ENCODE measurements at regions of chr18 and their contacts with region 1.

Region 1: DNA sequence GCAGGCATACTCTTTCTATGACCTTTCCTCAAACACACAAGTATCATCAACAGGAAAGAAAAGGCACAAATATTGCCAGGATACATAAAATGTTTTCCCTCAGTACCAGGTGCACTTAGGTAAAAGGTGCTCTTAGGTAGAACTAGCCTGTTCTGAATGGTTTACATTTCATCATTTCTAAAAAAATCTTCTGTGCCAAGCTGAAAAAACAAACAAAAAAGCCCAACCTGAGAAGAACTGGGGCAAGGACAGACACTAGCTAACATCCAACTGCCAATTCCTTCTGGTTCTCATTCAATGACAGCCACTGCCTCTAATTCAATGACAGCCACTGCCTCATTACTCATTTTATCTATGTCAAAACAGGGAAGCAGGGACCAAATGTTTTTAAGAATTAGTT is 68.5 kb downstream of the SPIRE1 start:
- DNase-seq: no peak
- H3K4me3 ChIP-seq: no peak overlapping the region
- H3K27ac ChIP-seq: no peak overlapping the region
- H3K4me1 ChIP-seq: peaks cover 2% of the 10 kb centered on the region
- H3K27me3 ChIP-seq: no peaks in the 10 kb centered on the region
- CTCF ChIP-seq: no peak
- POLR2A ChIP-seq: no peak

Region 2: DNA sequence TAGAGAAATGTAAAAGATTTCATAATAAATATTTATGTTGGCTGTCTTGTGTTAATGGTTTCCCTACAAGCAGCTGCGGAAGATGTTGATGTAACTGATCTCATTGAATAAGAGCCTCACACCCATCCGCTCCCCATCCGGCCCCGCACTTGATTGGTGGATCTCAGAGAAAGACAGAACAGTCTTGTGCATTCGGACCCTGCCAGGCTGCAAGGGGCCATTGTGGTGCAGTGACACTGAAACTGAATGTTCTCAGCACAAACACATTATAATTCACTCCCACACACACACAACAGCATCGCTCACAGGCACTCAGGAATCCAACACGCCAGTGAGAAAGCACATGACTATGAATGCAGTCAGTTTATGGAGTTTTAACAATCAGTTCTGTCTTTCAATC is 134.0 kb before region 1 on chr18:
- CTCF ChIA-PET with region 1: no interaction called
- POLR2A ChIA-PET with region 1: no interaction called
- dilution Hi-C with region 1: no loop called
- intact Hi-C with region 1: no loop called
- DNase-seq: no peak
- H3K4me3 ChIP-seq: no peak overlapping the region
- H3K27ac ChIP-seq: no peak overlapping the region
- H3K4me1 ChIP-seq: peaks cover 20% of the 10 kb centered on the region
- H3K27me3 ChIP-seq: no peaks in the 10 kb centered on the region
- CTCF ChIP-seq: no peak
- POLR2A ChIP-seq: no peak

Region 3: GRCh38 chr18:12552884-12553242 is 36.6 kb before region 1 on chr18:
- CTCF ChIA-PET with region 1: no interaction called
- POLR2A ChIA-PET with region 1: no interaction called
- dilution Hi-C with region 1: no loop called
- intact Hi-C with region 1: loop called (anchors 5 kb)
- DNase-seq: no peak
- H3K4me3 ChIP-seq: no peak overlapping the region
- H3K27ac ChIP-seq: no peak overlapping the region
- H3K4me1 ChIP-seq: no peaks in the 10 kb centered on the region
- H3K27me3 ChIP-seq: no peaks in the 10 kb centered on the region
- CTCF ChIP-seq: no peak
- POLR2A ChIP-seq: no peak